ENCODE measurements at regions of chr18 and their contacts with region 1.

Region 1: DNA sequence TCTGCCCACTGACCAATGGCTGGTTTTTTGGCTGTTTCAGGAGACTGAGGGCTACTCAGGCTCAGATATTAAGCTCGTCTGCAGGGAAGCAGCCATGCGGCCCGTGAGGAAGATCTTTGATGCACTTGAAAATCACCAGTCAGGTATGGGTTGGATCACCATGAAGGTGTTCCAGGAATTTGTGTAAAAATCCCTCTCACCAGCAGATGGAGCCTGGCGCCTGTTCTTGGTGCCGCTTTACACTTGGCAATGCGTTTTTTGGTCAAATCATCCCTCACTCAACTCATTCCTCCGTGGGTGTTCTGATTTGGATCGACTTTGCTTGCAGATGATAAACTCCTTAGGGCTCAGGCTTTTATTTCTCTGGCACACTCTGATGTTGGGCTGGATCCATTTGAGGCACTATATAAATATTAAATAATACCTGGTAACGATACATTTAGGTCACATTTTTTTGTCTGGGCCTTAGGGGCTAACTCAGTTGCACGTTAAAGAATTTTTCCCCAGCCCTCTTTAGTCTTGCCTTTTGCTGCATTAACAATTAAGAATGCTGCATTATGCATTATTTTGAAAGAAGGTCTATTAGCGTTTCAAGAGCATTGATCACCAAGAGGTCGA is 50.0 kb downstream of the HDHD2 start:
- DNase-seq: peak; percentile 38 to 83 (median 53)
- H3K4me3 ChIP-seq: no peak overlapping the region
- H3K27ac ChIP-seq: no peak overlapping the region
- H3K4me1 ChIP-seq: no peaks in the 10 kb centered on the region
- H3K27me3 ChIP-seq: no peaks in the 10 kb centered on the region
- CTCF ChIP-seq: peak; percentile 49 to 79 (median 76)
- POLR2A ChIP-seq: no peak

Region 2: DNA sequence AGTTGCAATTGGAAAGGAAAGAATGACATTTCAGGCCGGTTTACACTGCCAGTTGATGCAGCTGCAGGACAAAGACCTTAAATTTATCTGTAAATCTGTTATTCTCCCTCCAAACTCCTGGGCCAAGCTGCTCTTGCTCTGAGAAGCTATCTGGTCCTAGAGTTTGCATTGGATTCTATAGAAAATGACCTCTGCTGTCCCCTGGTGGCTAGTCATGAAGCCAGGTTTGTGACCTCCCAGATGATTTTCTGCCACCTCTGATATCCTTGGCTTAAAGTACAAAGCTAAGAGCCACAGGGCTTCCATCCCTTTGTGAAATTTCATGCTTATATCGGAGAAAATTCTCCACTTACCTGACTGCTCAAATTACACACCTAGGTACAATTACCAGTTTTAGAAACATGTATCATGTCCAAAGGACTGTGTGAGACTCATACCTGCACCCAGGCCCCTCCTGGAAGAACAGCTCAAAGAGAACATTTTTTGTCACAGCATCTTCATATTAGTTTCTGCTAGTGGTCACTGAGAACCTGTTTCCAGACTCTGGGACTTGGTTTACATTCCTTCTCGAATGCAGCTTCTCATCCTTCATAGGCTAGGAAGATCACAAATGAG is 104.7 kb after region 1 on chr18:
- intact Hi-C with region 1: loop called (anchors 2 to 10 kb)
- DNase-seq: peak; percentile 26 to 72 (median 43)
- H3K4me3 ChIP-seq: no peak overlapping the region
- H3K27ac ChIP-seq: no peak overlapping the region
- H3K4me1 ChIP-seq: no peaks in the 10 kb centered on the region
- H3K27me3 ChIP-seq: peaks cover 9% of the 10 kb centered on the region
- CTCF ChIP-seq: peak; percentile 78 to 91 (median 86)
- POLR2A ChIP-seq: no peak

Region 3: DNA sequence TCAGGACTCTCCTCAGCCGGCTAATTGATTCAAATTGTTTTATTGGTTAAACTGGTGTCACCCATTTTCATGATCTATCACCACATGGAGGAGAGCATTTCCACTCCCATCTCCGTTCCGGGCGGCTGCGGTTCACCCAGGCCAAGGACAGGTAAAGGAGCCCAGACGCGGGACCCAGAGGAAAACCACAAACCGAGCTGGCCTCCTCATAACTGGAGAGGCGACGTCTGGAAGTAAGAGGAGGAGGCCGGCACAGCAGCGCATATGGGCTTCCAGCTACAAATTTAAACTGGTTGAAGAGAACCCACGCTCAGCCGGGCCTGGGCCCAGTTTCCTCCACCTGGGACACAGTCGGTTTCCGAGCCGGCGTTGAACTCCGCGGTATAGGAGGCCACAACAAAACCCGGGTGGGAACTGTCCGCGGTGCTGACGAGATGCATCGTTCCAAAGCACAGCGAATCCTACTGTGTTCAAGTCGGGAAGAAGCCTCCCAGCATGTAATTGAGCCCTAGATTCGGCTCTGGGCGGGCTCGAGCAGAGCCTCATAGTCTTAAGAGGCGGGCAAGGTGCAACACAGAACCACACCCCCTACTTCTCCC is 154.1 kb after region 1 on chr18:
- intact Hi-C with region 1: no loop called
- DNase-seq: peak; percentile 46 to 66 (median 56)
- H3K4me3 ChIP-seq: no peak overlapping the region
- H3K27ac ChIP-seq: no peak overlapping the region
- H3K4me1 ChIP-seq: no peaks in the 10 kb centered on the region
- H3K27me3 ChIP-seq: peaks cover 90% of the 10 kb centered on the region
- CTCF ChIP-seq: no peak
- POLR2A ChIP-seq: no peak

Region 4: DNA sequence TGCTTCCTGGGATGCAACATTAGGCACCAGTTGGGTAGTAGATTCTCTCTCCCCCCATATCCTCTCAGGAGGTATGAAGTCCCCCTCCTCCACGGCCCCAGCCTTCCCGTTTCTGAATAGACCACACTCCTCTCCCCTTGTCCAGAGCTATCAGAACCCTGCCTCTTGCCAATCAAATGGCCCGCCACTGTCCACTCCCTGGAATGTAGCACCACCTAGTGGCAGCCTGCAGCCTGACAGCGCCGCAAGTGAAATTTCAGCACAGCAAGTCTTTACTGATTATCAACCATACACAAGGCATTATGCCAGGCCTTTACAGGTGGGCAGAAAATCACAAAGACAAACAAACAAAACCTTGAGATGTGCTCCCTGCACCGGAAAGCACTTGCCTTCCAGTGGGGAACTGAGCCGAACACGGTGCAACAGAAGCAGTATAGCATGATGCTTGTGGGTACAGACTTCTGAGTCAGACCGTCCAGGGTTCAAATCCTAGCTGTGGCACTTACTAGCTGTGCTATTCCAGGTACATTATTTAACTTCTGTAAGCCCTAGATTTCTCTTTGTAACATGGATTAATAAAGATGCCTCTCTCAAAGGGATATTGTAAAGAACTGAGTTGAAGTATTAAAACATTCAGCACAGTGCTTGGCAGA is 656.2 kb after region 1 on chr18:
- intact Hi-C with region 1: loop called in 1 of 2 experiments (anchors 10 kb)
- DNase-seq: peak; percentile 42 to 83 (median 70)
- H3K4me3 ChIP-seq: no peak overlapping the region
- H3K27ac ChIP-seq: no peak overlapping the region
- H3K4me1 ChIP-seq: no peaks in the 10 kb centered on the region
- H3K27me3 ChIP-seq: no peaks in the 10 kb centered on the region
- CTCF ChIP-seq: peak; percentile 57 to 94 (median 76)
- POLR2A ChIP-seq: no peak

Region 5: GRCh38 chr18:48059455-48060010 is 959.2 kb after region 1 on chr18:
- intact Hi-C with region 1: no loop called
- DNase-seq: no peak
- H3K4me3 ChIP-seq: no peak overlapping the region
- H3K27ac ChIP-seq: no peak overlapping the region
- H3K4me1 ChIP-seq: no peaks in the 10 kb centered on the region
- H3K27me3 ChIP-seq: no peaks in the 10 kb centered on the region
- CTCF ChIP-seq: no peak
- POLR2A ChIP-seq: no peak